Psoas muscle (tissue), 8 donors: ENCODE measurements at regions of chr17 and their contacts with region 1.

Region 1: DNA sequence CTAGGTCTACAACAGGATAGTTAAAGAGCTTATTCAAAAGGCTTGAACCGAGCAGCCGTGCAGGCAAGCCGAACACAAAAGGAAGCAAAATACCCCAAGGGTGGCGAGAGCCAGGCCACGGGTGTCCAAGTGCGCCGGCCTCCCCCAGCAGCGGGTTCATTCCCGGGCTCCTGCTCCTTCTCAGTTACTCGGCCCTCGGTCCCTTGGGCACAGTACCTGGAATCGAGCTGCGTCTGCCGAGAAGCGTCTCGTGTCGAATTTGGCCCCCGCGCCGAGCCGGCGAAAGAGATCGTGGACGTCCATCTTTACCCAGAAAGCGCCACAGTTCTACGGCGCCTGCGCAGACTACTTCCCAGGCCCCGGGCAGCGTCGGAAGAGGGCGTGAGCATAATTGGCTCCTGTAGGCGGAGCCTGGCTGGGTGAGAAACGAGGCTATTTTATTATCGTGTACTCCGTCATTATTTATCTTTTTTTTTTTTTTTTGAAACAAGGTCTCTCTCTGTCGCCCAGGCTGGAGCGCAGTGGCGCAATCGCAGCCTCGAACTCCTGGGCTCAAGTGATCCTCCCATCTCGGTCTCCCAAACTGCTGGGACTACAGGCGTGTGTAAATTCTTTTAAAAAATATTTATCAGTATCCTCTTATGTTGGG is at the start of gene DDX52:
- DNase-seq: peak; percentile 94 to 97
- ATAC-seq: peak; percentile 97 to 100 (median 98)
- H3K4me3 ChIP-seq: peak within 1 kb of the TSS; percentile 95
- H3K27ac ChIP-seq: peak within 1 kb of the TSS; percentile 94
- H3K4me1 ChIP-seq: peaks cover 20% of the 10 kb centered on the region
- H3K27me3 ChIP-seq: peaks cover 0 to 26% (median 0%) of the 10 kb centered on the region in 3 donors
- CTCF ChIP-seq: peak; percentile 6
- total RNA-seq, gene DDX52: 13.4 to 17.7 (median 16.3) TPM

Region 2: GRCh38 chr17:37562016-37562745 is 81.1 kb before region 1 on chr17:
- intact Hi-C with region 1: no loop called
- DNase-seq: no peak
- ATAC-seq: no peak
- H3K4me3 ChIP-seq: no peak overlapping the region
- H3K27ac ChIP-seq: no peak overlapping the region
- H3K4me1 ChIP-seq: no peaks in the 10 kb centered on the region
- H3K27me3 ChIP-seq: no peaks in the 10 kb centered on the region
- CTCF ChIP-seq: no peak

Region 3: GRCh38 chr17:37592291-37592690 is 51.0 kb before region 1 on chr17:
- intact Hi-C with region 1: no loop called
- DNase-seq: no peak
- ATAC-seq: peak in 1 of 4 donors; percentile 30
- H3K4me3 ChIP-seq: no peak overlapping the region
- H3K27ac ChIP-seq: no peak overlapping the region
- H3K4me1 ChIP-seq: no peaks in the 10 kb centered on the region
- H3K27me3 ChIP-seq: no peaks in the 10 kb centered on the region
- CTCF ChIP-seq: no peak

Region 4: GRCh38 chr17:37818689-37819088 is 175.4 kb after region 1 on chr17:
- intact Hi-C with region 1: loop called in 1 of 2 experiments (anchors 10 kb)
- DNase-seq: no peak
- ATAC-seq: no peak
- H3K4me3 ChIP-seq: no peak overlapping the region
- H3K27ac ChIP-seq: no peak overlapping the region
- H3K4me1 ChIP-seq: no peaks in the 10 kb centered on the region
- H3K27me3 ChIP-seq: peaks cover 0 to 7% (median 4%) of the 10 kb centered on the region in 3 donors
- CTCF ChIP-seq: no peak